ENCODE measurements at regions of chr9 and their contacts with region 1.

Region 1: DNA sequence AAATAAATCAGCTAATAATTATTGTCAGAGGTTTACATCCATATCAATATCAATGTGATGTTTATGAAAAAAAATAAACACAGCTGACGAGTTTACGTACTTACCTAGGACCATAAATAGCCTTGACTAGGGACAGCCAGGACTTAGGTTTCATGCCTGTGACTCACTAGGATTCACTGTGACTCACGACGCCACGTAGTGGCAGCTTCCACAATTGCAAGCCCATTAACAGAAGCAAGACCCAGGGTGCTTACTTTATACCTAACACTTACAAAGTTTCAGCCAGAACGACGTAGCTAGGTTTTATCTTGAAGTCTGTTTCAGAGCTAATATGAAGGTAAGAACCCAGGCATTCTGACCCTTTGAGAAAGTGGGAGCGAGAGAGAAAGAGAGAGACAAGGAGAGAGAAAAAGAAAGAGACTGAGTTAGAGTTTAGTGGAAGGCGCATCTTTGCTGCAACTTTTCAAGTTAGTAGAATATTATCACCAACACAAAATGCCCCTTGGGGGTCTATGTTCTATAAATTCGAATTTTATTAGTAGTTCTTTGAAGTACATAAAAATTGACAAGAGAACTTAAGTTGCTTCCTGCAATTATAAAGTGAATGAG is 191.2 kb downstream of the GNA14 start:
- DNase-seq: peak; percentile 75 to 84
- H3K4me3 ChIP-seq: no peak overlapping the region
- H3K27ac ChIP-seq: no peak overlapping the region
- H3K4me1 ChIP-seq: no peaks in the 10 kb centered on the region
- H3K27me3 ChIP-seq: no peaks in the 10 kb centered on the region
- CTCF ChIP-seq: peak; percentile 93

Region 2: DNA sequence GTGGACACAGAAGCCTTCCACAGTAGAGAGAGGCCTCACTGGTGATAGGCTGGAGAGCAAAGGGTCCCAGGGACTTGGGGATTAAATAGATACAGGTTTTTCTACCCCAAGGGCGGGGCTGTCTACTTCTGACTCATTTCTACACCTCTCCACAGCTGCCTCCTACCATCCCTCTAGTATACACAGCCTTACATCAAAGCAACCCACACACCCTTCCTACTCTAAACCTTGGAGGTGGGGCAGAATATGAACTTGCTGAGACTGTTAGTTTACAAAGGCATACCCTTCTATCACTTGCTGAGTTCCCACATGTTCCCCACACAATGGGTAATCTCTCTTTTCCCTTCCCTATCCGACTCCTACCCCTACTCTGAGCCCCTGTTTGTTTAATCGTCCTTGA is 712.6 kb before region 1 on chr9:
- CTCF ChIA-PET with region 1: no interaction called
- POLR2A ChIA-PET with region 1: interaction called, 14 read pairs
- intact Hi-C with region 1: no loop called
- DNase-seq: no peak
- H3K4me3 ChIP-seq: no peak overlapping the region
- H3K27ac ChIP-seq: no peak overlapping the region
- H3K4me1 ChIP-seq: no peaks in the 10 kb centered on the region
- H3K27me3 ChIP-seq: peaks cover 52% of the 10 kb centered on the region
- CTCF ChIP-seq: no peak

Region 3: GRCh38 chr9:77402286-77402685 is 54.6 kb before region 1 on chr9:
- CTCF ChIA-PET with region 1: no interaction called
- POLR2A ChIA-PET with region 1: no interaction called
- intact Hi-C with region 1: no loop called
- DNase-seq: no peak
- H3K4me3 ChIP-seq: no peak overlapping the region
- H3K27ac ChIP-seq: no peak overlapping the region
- H3K4me1 ChIP-seq: no peaks in the 10 kb centered on the region
- H3K27me3 ChIP-seq: no peaks in the 10 kb centered on the region
- CTCF ChIP-seq: no peak

Region 4: DNA sequence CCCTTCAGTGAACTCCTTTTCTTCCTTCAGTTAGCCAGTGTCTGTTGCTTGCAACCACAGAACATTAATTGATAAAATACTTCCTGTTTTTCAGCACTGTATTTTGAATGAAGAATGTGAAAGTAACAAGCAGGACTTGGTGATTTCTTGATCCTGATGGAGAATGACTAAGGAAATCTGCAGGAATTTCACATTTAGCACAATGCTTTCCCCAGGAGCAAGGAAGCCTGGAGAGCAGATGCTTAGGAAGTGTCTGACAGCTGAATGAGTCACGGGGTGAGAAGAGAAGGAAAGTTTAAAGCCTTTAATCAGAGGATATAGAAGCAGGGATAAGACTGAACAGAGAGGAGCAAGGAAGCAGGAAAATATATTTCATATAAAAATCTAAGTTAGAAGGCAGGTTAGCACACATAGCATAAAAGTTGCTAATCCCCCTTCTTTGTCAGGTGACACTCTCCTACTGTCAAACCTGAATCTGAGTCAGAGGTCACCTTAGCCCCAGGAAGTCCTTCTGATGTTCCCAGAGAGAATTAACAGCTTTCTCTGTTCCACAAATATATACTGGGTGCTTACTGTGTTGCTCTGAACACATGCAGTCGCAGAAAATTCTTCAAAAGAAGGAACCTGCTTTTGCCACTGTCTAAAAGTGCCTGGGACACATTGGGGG is 131.5 kb after region 1 on chr9:
- CTCF ChIA-PET with region 1: no interaction called
- POLR2A ChIA-PET with region 1: no interaction called
- intact Hi-C with region 1: loop called (anchors 5 kb)
- DNase-seq: peak; percentile 31 to 89
- H3K4me3 ChIP-seq: peak overlapping the region; percentile 45; the same call in 1 of the 2 replicates
- H3K27ac ChIP-seq: peak overlapping the region; percentile 96
- H3K4me1 ChIP-seq: peaks cover 50% of the 10 kb centered on the region
- H3K27me3 ChIP-seq: no peaks in the 10 kb centered on the region
- CTCF ChIP-seq: no peak

Region 5: DNA sequence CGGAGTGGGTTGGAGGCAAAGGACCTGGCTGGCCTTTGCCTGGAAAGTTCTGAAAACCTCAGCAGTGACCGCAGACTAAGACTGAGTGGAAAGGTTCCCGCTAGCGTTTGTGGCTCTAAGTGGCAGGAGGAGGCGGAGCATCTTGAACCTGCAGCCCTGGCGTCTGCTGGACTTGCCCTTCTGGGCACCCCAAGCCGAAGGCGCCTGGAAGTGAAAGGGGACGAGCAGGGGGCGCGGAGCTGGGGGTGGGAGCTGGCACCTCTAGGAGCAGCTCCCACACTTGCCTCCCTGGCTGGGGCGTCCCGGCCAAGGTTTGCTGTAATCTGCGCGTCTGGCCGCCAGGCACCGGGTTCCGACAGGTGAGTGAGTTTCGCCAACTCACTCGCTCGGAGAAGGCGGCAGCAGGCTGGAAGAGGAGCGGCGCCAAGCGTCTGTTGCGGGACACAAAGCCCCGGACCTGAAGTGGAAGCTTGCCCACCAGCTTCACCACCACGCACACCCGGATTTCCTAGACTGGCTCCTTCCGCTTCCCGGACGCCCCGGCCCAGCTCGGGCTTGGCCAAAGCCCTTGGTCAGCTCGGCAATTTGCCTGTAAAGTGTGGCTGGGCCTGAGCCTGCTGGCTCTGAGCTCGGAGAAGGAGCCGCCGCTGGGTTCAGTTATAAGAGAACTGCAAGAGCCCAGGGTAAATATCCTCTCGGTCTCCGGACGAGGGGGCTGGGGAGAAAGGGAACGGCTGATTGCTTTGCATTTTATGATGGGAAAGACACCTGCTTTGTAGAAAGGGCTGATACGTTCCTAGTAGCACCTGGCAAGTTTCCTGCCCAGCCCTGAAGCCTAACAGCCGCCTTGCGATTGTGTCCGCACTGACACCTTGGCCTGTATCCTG is 191.5 kb after region 1 on chr9 and contains the start of gene GNA14:
- CTCF ChIA-PET with region 1: no interaction called
- POLR2A ChIA-PET with region 1: no interaction called
- intact Hi-C with region 1: loop called (anchors 1 kb)
- DNase-seq: peak in 1 of 2 experiments; percentile 70
- H3K4me3 ChIP-seq: no peak within 1 kb of the TSS
- H3K27ac ChIP-seq: no peak within 1 kb of the TSS
- H3K4me1 ChIP-seq: no peaks in the 10 kb centered on the region
- H3K27me3 ChIP-seq: no peaks in the 10 kb centered on the region
- CTCF ChIP-seq: no peak
- total RNA-seq, gene GNA14: 1.1 and 1.3 TPM in 2 replicates

Region 6: DNA sequence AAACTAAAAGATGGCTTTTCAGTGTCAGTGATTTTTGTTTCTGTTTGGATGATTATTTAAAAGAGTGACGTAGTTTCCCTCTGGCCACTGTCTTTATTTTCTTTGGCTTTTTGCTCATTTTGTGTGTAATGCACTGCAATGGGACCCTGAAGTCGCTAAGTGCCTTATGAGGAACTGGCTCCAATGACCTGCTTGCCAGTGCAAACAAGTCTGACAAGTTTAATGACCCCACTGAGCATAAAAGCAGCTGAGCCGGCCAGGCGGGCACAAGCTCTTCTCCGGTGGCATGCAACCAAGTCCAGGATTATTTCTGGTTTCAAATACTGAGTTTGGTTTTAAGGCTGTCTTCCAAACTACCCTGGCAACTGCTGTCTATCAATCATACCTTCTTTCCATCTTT is 206.8 kb after region 1 on chr9:
- CTCF ChIA-PET with region 1: no interaction called
- POLR2A ChIA-PET with region 1: no interaction called
- intact Hi-C with region 1: loop called (anchors 5 kb)
- DNase-seq: peak; percentile 75 to 86
- H3K4me3 ChIP-seq: no peak overlapping the region; the same call in 1 of the 2 replicates
- H3K27ac ChIP-seq: 0 out of 2 replicates have a peak overlapping the region, but pooled peaks have one; percentile 3
- H3K4me1 ChIP-seq: peaks cover 21% of the 10 kb centered on the region
- H3K27me3 ChIP-seq: no peaks in the 10 kb centered on the region
- CTCF ChIP-seq: no peak

Region 7: DNA sequence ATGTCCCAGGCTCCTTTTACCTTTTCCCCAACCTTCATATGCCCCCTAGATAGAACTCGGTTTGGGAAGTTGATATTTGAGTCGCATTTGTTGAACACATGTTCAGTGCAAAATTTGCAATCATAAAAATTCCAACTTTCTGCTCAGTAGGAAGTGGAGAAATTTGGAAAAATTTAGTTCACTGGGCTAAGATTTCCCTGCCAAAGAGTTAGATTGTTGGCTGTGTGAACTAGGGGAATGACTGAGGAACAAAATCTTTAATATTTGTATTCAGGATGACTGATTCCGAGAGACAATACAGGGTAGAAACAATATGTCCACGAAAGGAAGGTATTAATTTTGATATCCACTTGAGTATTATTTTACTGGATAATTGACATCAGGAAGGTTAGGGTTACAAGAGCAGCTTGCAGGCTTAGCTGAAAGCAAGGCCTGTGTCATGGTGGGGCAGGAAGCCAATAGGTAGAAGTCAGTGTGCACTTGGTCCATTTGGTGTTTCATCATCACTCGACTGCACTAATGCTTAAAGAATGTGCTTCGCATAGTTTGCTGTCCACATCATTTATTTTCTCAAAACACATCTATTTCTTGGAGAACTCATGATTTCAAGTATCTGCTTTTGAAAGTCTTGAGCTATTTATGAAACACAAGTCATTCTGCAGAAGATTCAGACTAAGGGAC is 250.6 kb after region 1 on chr9:
- CTCF ChIA-PET with region 1: interaction called, 3 read pairs
- POLR2A ChIA-PET with region 1: no interaction called
- intact Hi-C with region 1: loop called (anchors 5 kb)
- DNase-seq: peak; percentile 71 to 90
- H3K4me3 ChIP-seq: no peak overlapping the region
- H3K27ac ChIP-seq: peak overlapping the region; percentile 59
- H3K4me1 ChIP-seq: peaks cover 21% of the 10 kb centered on the region
- H3K27me3 ChIP-seq: no peaks in the 10 kb centered on the region
- CTCF ChIP-seq: no peak

Region 8: GRCh38 chr9:77751341-77752091 is 294.6 kb after region 1 on chr9:
- CTCF ChIA-PET with region 1: interaction called, 10 read pairs
- POLR2A ChIA-PET with region 1: no interaction called
- intact Hi-C with region 1: loop called (anchors 1 kb)
- DNase-seq: peak; percentile 28 to 38
- H3K4me3 ChIP-seq: no peak overlapping the region
- H3K27ac ChIP-seq: no peak overlapping the region
- H3K4me1 ChIP-seq: no peaks in the 10 kb centered on the region; the same call in 1 of the 2 replicates
- H3K27me3 ChIP-seq: no peaks in the 10 kb centered on the region
- CTCF ChIP-seq: peak; percentile 77

Region 9: DNA sequence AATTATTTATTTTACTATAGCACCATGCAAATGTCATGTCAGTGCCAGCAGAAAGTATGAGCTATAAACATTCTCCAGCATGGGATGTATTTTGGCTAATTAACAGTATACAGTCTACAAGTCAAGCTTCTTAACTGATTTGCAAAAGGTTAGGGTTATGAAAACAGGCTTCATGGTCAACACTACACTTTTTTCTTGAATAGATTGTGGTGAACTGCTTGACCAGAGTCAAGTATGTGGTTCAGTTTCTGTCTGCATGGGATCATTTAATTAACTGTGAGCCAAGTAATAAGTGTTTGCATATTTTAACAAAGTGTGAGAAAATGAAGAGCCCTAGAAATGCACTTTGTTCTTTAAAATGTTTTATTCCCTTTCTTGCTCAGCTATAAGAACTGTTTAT is 589.2 kb after region 1 on chr9:
- CTCF ChIA-PET with region 1: no interaction called
- POLR2A ChIA-PET with region 1: no interaction called
- intact Hi-C with region 1: no loop called
- DNase-seq: no peak
- H3K4me3 ChIP-seq: no peak overlapping the region
- H3K27ac ChIP-seq: no peak overlapping the region
- H3K4me1 ChIP-seq: peaks cover 6% of the 10 kb centered on the region; the same call in 1 of the 2 replicates
- H3K27me3 ChIP-seq: no peaks in the 10 kb centered on the region
- CTCF ChIP-seq: no peak

Measured in PC-9 (cell line).